ENCODE measurements at regions of chr9 and their contacts with region 1.

Region 1: DNA sequence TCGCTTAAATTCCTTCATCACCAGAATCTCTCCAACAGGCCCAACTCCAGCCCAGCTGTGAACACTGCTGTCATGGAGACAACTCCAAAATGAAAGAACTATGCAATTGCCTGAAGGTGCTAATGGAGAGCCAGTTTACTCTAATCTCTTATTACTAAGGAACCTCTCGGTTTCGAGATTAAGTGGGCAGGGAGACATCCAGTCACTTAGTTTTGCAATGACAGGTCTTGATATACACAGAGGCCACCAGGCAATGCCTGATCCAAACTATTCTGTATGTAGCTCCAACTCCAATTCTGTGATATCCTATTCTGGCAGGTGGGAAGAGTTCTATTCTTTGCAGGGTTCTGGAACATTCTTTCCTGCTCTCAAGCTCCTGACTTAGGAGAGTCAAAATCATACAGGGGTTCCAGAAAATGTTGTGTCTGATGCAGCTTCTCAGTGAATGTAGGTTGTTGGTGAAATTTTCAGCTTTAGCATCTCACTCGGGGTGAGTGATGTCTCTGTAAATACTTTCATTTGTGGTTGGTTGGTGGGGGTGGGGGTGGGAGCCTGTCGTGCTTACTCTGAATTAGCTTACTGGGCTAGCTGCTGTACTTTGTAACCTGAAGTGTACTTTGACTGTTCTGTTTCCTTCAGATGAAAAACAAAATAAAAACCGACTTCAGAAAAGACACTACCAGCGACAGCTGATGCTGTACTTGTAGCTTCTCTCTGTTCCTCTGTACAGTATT is 170.9 kb downstream of the PALM2AKAP2 start:
- DNase-seq: no peak
- ATAC-seq: peak; percentile 34
- H3K4me3 ChIP-seq: no peak overlapping the region
- H3K4me3 Mint-ChIP-seq: no peak overlapping the region
- H3K27ac ChIP-seq: no peak overlapping the region
- H3K27ac Mint-ChIP-seq: peak overlapping the region; percentile 62
- H3K4me1 ChIP-seq: peaks cover 15% of the 10 kb centered on the region
- H3K4me1 Mint-ChIP-seq: peaks cover 18% of the 10 kb centered on the region
- H3K27me3 ChIP-seq: no peaks in the 10 kb centered on the region
- H3K27me3 Mint-ChIP-seq: no peaks in the 10 kb centered on the region
- CTCF ChIP-seq: no peak

Region 2: GRCh38 chr9:109969011-109969410 is 18.1 kb after region 1 on chr9:
- CTCF ChIA-PET with region 1: no interaction called
- POLR2A ChIA-PET with region 1: interaction called, 16 read pairs
- intact Hi-C with region 1: no loop called
- DNase-seq: no peak
- ATAC-seq: no peak
- H3K4me3 ChIP-seq: no peak overlapping the region
- H3K4me3 Mint-ChIP-seq: peak overlapping the region; percentile 21
- H3K27ac ChIP-seq: peak overlapping the region; percentile 58 to 60
- H3K27ac Mint-ChIP-seq: peak overlapping the region; percentile 82
- H3K4me1 ChIP-seq: peaks cover 59% of the 10 kb centered on the region
- H3K4me1 Mint-ChIP-seq: peaks cover 72% of the 10 kb centered on the region
- H3K27me3 ChIP-seq: no peaks in the 10 kb centered on the region
- H3K27me3 Mint-ChIP-seq: no peaks in the 10 kb centered on the region
- CTCF ChIP-seq: no peak

Region 3: DNA sequence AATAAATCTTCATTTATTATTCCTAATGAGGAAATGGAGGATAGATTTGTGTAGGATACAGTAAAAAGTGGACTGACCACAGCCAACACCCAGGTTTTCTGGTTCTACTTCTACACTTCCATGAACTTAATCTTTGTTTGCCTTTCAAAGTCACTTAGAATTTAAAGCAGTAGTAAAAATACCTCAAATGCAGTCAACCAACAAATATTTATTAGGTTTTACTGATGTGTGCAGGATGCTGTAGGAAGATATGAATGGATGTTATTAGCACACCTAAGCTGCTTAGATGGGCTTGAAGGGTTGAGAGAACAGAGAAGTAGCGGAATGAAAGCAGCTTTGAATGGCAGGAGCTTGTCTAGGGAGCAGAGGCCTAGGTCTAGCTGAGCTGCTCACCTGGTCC is 30.2 kb after region 1 on chr9:
- CTCF ChIA-PET with region 1: no interaction called
- POLR2A ChIA-PET with region 1: no interaction called
- intact Hi-C with region 1: no loop called
- DNase-seq: no peak
- ATAC-seq: no peak
- H3K4me3 ChIP-seq: no peak overlapping the region
- H3K4me3 Mint-ChIP-seq: no peak overlapping the region
- H3K27ac ChIP-seq: no peak overlapping the region
- H3K27ac Mint-ChIP-seq: no peak overlapping the region
- H3K4me1 ChIP-seq: no peaks in the 10 kb centered on the region
- H3K4me1 Mint-ChIP-seq: no peaks in the 10 kb centered on the region
- H3K27me3 ChIP-seq: no peaks in the 10 kb centered on the region
- H3K27me3 Mint-ChIP-seq: no peaks in the 10 kb centered on the region
- CTCF ChIP-seq: no peak

Region 4: DNA sequence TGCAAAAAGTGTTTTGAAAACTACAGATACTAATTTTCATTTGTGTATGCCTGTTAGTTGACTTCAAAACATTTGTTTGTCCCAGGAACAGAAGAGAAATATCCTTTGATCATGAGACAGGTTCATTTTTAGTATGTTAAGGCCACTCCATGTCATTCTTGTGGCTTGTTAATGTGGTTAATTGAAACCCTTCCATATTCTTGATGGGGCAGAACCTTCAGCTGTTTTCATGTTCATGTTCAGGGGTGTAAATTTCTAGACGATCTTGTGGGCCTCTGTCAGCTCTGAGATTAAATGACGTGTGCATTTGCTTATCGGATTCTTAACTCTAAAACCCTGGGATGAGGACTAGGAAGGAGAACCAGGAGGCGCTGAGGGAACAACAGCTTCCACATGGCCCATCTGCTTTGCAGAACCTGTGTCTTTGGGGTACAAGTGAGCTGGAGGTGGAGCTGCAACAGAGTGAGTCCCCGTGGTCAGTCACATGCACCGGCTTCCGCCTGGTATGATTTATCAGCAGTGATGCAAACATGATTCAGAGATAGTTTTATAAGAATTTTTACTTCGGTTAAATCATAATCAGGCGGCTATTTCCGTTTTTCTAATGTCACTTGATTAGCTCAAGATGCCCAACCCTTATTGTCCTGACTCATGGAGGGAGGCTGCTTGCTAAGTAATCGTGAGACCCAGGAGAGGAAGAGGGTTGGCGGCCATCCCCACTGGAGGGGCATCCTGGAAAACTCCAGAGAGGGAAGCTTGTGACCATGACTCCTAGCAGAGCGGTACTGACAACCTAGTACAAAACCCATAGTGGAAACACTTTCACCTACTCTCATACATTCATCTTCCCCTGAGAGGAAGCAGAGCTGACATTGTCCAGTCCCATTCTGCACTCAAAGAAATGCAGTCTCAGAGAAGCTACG is 118.7 kb after region 1 on chr9:
- CTCF ChIA-PET with region 1: no interaction called
- POLR2A ChIA-PET with region 1: no interaction called
- intact Hi-C with region 1: no loop called
- DNase-seq: peak in 2 of 14 experiments; percentile 50 to 66
- ATAC-seq: no peak
- H3K4me3 ChIP-seq: no peak overlapping the region
- H3K4me3 Mint-ChIP-seq: no peak overlapping the region
- H3K27ac ChIP-seq: no peak overlapping the region
- H3K27ac Mint-ChIP-seq: no peak overlapping the region
- H3K4me1 ChIP-seq: no peaks in the 10 kb centered on the region
- H3K4me1 Mint-ChIP-seq: peaks cover 14% of the 10 kb centered on the region
- H3K27me3 ChIP-seq: no peaks in the 10 kb centered on the region
- H3K27me3 Mint-ChIP-seq: no peaks in the 10 kb centered on the region
- CTCF ChIP-seq: no peak